ENCODE measurements at regions of chr18 and their contacts with region 1.

Region 1: GRCh38 chr18:31261792-31262582 is 56.0 kb upstream of the DSG1 start:
- DNase-seq: peak in 1 of 2 experiments; percentile 56
- H3K4me3 ChIP-seq: no peak overlapping the region
- H3K4me3 Mint-ChIP-seq: no peak overlapping the region
- H3K27ac Mint-ChIP-seq: peak overlapping the region; percentile 84
- H3K4me1 ChIP-seq: peaks cover 21% of the 10 kb centered on the region
- H3K4me1 Mint-ChIP-seq: peaks cover 5% of the 10 kb centered on the region
- H3K27me3 ChIP-seq: no peaks in the 10 kb centered on the region
- H3K27me3 Mint-ChIP-seq: no peaks in the 10 kb centered on the region
- CTCF ChIP-seq: no peak

Region 2: DNA sequence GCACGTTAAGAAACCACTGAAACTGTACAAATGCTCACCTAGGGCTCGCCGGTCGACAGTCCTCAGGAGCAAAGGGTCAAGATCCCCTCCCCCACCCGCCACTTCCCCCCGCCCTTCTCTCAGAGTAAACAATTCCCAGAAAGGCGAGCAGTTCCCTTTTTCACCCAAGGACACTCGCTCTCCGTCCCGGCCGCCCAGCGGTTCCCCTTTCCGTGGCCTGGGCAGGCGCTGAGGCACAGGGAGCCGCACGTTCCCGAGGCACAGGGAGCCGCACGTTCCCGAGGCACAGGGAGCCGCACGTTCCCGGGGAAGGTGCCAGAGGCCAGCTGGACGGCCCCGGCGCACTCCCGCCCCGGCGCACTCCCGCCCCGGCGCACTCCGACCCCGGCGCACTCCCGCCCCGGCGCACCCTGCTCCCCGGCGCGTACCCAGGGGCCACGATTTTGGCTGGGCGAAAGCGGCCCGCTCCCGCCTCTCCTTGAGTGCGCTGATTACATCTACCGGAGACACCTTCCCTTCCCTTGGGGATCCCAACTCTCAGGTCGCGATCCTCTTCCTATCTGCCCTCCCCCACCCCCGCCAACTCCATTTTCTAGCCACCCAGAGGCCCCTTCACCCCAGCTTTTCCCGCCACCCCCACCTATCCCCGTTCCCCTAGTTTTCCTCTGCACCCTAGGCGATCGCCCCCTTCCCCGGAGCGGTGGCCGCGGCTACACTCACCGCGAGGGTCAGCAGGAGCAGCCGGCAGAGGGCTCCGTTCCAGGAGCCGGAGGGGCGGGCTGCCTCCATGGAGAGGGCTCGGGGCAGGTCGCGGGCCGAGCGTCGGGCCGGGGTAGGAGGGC is 160.6 kb before region 1 on chr18:
- CTCF ChIA-PET with region 1: no interaction called
- POLR2A ChIA-PET with region 1: no interaction called
- intact Hi-C with region 1: loop called (anchors 1 kb)
- DNase-seq: peak; percentile 61 to 67
- H3K4me3 ChIP-seq: peak overlapping the region; percentile 69
- H3K4me3 Mint-ChIP-seq: peak overlapping the region; percentile 83
- H3K27ac Mint-ChIP-seq: peak overlapping the region; percentile 86
- H3K4me1 ChIP-seq: no peaks in the 10 kb centered on the region
- H3K4me1 Mint-ChIP-seq: peaks cover 17% of the 10 kb centered on the region
- H3K27me3 ChIP-seq: no peaks in the 10 kb centered on the region
- H3K27me3 Mint-ChIP-seq: no peaks in the 10 kb centered on the region
- CTCF ChIP-seq: peak in 1 of 2 experiments; percentile 25

Region 3: GRCh38 chr18:31497837-31498573 is 236.0 kb after region 1 on chr18 and contains the start of gene DSG2:
- CTCF ChIA-PET with region 1: no interaction called
- POLR2A ChIA-PET with region 1: no interaction called
- intact Hi-C with region 1: loop called (anchors 5 kb)
- DNase-seq: peak; percentile 66 to 75
- H3K4me3 ChIP-seq: peak within 1 kb of the TSS; percentile 72
- H3K4me3 Mint-ChIP-seq: peak within 1 kb of the TSS; percentile 79
- H3K27ac Mint-ChIP-seq: peak within 1 kb of the TSS; percentile 61
- H3K4me1 ChIP-seq: peaks cover 5% of the 10 kb centered on the region; the same call in 1 of the 2 replicates
- H3K4me1 Mint-ChIP-seq: peaks cover 6% of the 10 kb centered on the region
- H3K27me3 ChIP-seq: no peaks in the 10 kb centered on the region
- H3K27me3 Mint-ChIP-seq: no peaks in the 10 kb centered on the region
- CTCF ChIP-seq: no peak
- total RNA-seq, gene DSG2: 32.1 and 33.6 TPM in 2 replicates

Region 4: DNA sequence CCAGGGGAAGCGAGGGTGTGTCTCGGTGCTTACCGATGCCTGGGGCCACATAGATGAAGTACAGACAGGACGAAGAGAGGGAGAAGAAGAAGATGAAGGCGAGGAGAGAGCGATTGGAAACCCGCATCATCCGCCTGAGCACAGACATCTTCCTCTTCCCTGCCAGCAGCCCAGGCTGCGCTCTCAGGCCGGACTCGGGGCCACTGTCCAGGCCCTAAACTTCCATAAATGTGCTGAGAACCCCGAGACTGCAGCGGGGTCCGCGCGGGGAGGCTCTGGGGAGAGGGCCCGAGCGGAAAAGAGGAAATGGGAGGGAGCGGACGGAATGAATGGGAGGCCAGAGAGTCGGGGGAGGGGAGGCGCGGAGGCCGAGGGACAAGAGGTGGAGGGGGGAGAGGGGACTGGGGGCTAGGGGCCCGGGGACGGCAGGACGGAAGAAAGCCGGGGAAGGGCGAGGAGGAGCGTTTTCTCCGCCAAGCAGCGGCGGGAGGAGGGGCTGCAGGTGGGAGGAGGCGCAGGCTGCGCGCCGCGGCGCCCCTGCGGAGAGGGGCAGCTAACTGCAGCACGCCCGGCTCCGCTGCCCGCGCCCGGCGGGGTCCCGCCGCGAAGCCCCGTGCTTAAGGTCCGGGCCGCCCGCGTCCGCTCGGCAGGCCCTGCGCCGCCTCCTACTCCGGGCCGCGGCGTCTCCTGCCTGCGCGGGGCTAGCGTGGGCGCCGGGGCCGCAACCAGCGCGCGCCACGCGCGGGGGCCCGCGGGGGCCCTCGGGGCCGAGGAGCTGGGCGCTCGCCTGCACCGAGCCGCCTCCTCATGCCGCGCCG is 422.5 kb after region 1 on chr18 and contains the start of gene B4GALT6:
- CTCF ChIA-PET with region 1: no interaction called
- POLR2A ChIA-PET with region 1: no interaction called
- intact Hi-C with region 1: no loop called
- DNase-seq: peak; percentile 53 to 57
- H3K4me3 ChIP-seq: peak within 1 kb of the TSS; percentile 67
- H3K4me3 Mint-ChIP-seq: peak within 1 kb of the TSS; percentile 94
- H3K27ac Mint-ChIP-seq: peak within 1 kb of the TSS; percentile 92
- H3K4me1 ChIP-seq: peaks cover 34% of the 10 kb centered on the region
- H3K4me1 Mint-ChIP-seq: peaks cover 22% of the 10 kb centered on the region
- H3K27me3 ChIP-seq: no peaks in the 10 kb centered on the region
- H3K27me3 Mint-ChIP-seq: no peaks in the 10 kb centered on the region
- CTCF ChIP-seq: no peak
- total RNA-seq, gene B4GALT6: 22.4 and 28.5 TPM in 2 replicates

Region 5: GRCh38 chr18:31701744-31702143 is 439.8 kb after region 1 on chr18:
- CTCF ChIA-PET with region 1: no interaction called
- POLR2A ChIA-PET with region 1: no interaction called
- intact Hi-C with region 1: no loop called
- DNase-seq: no peak
- H3K4me3 ChIP-seq: no peak overlapping the region
- H3K4me3 Mint-ChIP-seq: no peak overlapping the region
- H3K27ac Mint-ChIP-seq: no peak overlapping the region
- H3K4me1 ChIP-seq: no peaks in the 10 kb centered on the region; the same call in 1 of the 2 replicates
- H3K4me1 Mint-ChIP-seq: no peaks in the 10 kb centered on the region
- H3K27me3 ChIP-seq: no peaks in the 10 kb centered on the region
- H3K27me3 Mint-ChIP-seq: no peaks in the 10 kb centered on the region
- CTCF ChIP-seq: no peak

Measured in Caco-2 (cell line).